ENCODE measurements at regions of chr12 and their contacts with region 1.

Region 1: GRCh38 chr12:101759396-101760047 is 20.3 kb upstream of the SYCP3 start:
- DNase-seq: peak; percentile 33
- H3K4me3 ChIP-seq: no peak overlapping the region
- H3K27ac ChIP-seq: no peak overlapping the region
- H3K4me1 ChIP-seq: no peaks in the 10 kb centered on the region
- H3K27me3 ChIP-seq: no peaks in the 10 kb centered on the region
- CTCF ChIP-seq: peak; percentile 53 to 64
- POLR2A ChIP-seq: no peak

Region 2: DNA sequence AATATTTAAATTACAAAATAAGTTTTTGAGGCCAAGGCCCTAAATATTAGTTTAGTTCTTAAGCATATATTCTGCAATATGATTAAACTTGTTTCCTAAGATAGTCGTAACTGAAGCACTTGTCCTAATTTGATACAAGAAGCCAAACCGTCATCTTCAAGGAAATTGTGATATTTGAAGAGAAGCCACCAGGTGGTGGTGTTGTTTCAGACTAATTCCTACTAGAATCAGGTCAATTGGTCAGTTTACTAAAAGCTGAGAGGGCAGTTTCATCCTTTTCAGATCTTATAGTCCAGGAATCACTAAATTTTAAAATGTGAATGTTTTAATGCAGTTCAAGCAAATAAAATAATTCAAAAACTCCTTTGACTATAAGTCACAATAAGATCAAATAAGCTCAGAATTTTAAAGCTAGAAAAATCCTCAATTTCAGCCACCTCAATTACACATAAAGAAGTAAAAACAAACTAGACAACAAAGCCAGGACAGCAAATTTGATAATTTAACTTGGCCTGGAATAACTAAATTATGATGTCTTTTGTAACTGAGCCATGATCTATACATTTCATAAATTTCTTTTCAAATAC is 344.9 kb before region 1 on chr12:
- CTCF ChIA-PET with region 1: interaction called, 57 read pairs
- POLR2A ChIA-PET with region 1: no interaction called
- dilution Hi-C with region 1: no loop called
- intact Hi-C with region 1: loop called (anchors 1 kb)
- DNase-seq: peak; percentile 76
- H3K4me3 ChIP-seq: no peak overlapping the region
- H3K27ac ChIP-seq: no peak overlapping the region
- H3K4me1 ChIP-seq: no peaks in the 10 kb centered on the region
- H3K27me3 ChIP-seq: peaks cover 0 to 4% of the 10 kb centered on the region in 2 experiments
- CTCF ChIP-seq: peak; percentile 30 to 39
- POLR2A ChIP-seq: no peak

Region 3: GRCh38 chr12:101570047-101570446 is 189.5 kb before region 1 on chr12:
- CTCF ChIA-PET with region 1: interaction called, 5 read pairs
- POLR2A ChIA-PET with region 1: no interaction called
- dilution Hi-C with region 1: no loop called
- intact Hi-C with region 1: loop called (anchors 2 kb)
- DNase-seq: peak; percentile 10
- H3K4me3 ChIP-seq: no peak overlapping the region
- H3K27ac ChIP-seq: no peak overlapping the region
- H3K4me1 ChIP-seq: no peaks in the 10 kb centered on the region
- H3K27me3 ChIP-seq: peaks cover 0 to 2% of the 10 kb centered on the region in 2 experiments
- CTCF ChIP-seq: no peak
- POLR2A ChIP-seq: no peak

Region 4: DNA sequence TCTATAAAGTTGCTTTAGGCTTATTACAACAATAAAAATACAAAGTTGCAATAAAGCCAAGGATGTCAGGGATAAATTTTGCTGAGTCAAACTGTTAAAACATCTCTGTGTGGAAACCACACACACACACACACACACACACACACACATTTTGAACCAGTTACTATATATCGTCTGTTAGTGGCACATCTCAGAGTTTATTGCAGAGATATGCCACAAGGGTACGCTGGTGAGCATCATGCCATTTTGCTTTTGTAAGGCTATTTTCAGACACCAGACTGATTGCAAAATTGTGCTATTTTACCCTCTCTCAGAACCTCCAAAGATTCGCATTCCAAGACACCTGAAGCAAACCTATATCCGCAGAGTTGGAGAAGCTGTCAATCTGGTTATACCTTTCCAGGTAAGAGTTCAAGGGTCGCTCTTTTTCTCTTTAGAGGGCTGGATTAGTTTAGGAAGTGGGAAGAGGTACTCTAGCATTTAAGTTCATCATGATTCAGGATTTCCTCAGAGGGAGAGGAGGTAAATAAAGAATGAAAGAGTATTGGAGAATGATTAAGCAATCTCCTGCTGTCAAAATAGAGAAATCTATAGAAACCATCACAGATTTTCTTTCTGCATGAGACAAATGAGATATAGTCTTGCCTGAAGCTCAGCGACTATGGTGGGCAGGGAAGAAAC is 89.4 kb before region 1 on chr12:
- CTCF ChIA-PET with region 1: interaction called, 16 read pairs
- POLR2A ChIA-PET with region 1: no interaction called
- dilution Hi-C with region 1: no loop called
- intact Hi-C with region 1: loop called (anchors 1 kb)
- DNase-seq: peak; percentile 47
- H3K4me3 ChIP-seq: no peak overlapping the region
- H3K27ac ChIP-seq: no peak overlapping the region
- H3K4me1 ChIP-seq: no peaks in the 10 kb centered on the region
- H3K27me3 ChIP-seq: no peaks in the 10 kb centered on the region
- CTCF ChIP-seq: peak; percentile 33 to 46
- POLR2A ChIP-seq: no peak

Region 5: DNA sequence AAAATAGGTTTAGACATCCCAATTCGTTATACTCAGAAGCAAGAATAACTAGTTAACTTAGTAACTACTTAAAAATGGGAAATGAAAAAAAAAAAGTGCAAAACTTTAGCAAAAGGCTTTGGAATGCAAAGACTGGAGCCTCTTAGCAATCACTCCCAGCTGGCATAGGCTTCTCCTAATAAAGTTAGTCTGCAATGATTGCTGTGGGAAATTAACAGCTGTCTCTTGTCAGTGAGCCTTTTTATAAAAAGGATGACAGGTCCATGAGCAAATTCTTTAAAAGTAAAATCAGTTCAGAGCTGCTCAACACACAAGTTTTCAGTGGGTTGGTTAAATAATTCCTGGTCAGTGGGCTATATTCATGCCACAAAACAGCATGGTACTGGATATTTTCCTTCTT is 12.9 kb before region 1 on chr12:
- CTCF ChIA-PET with region 1: interaction called, 18 read pairs
- POLR2A ChIA-PET with region 1: no interaction called
- dilution Hi-C with region 1: no loop called
- intact Hi-C with region 1: no loop called
- DNase-seq: no peak
- H3K4me3 ChIP-seq: no peak overlapping the region
- H3K27ac ChIP-seq: no peak overlapping the region
- H3K4me1 ChIP-seq: no peaks in the 10 kb centered on the region
- H3K27me3 ChIP-seq: no peaks in the 10 kb centered on the region
- CTCF ChIP-seq: no peak
- POLR2A ChIP-seq: no peak

Region 6: DNA sequence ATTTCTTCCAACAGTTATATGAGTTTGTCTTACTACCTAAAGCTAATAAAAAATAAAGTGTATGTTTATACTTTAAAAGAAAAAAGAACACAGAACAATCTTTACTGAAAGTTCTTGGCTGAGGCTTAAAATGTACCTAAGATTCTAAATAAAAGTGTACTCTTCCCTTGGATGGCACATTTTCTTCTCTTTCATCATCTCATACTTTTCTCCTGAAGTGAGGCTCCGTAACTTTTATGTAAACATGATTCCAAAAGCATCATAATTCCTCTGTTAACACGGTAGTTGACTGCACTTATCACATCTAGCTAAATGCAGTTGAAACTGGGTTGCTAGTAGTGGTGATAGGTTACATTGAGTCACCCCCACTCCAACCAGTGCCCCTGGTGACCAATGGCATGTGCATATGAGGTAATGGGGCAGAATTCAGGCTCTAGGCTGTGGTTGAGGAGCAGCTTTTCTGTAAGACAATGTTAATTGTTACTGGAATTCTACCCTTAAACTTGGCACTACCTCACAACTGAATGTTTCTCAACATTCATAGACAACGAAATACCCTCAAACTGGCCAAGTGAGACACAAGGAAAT is 263.9 kb after region 1 on chr12:
- CTCF ChIA-PET with region 1: no interaction called
- POLR2A ChIA-PET with region 1: no interaction called
- dilution Hi-C with region 1: no loop called
- intact Hi-C with region 1: no loop called
- DNase-seq: no peak
- H3K4me3 ChIP-seq: no peak overlapping the region
- H3K27ac ChIP-seq: no peak overlapping the region
- H3K4me1 ChIP-seq: no peaks in the 10 kb centered on the region
- H3K27me3 ChIP-seq: no peaks in the 10 kb centered on the region
- CTCF ChIP-seq: no peak
- POLR2A ChIP-seq: no peak